Activated CD8-positive, alpha-beta T cell treated with anti-CD3 and anti-CD28 coated beads for 36 hours (primary cell): ENCODE measurements at regions of chr5 and their contacts with region 1.

Region 1: GRCh38 chr5:134041570-134042411 is 37.0 kb upstream of the VDAC1 start:
- DNase-seq: peak; percentile 41
- ATAC-seq: peak; percentile 32
- H3K4me3 Mint-ChIP-seq: no peak overlapping the region
- H3K27ac Mint-ChIP-seq: no peak overlapping the region
- H3K4me1 Mint-ChIP-seq: peaks cover 32% of the 10 kb centered on the region
- H3K27me3 Mint-ChIP-seq: no peaks in the 10 kb centered on the region
- CTCF ChIP-seq: no peak

Region 2: DNA sequence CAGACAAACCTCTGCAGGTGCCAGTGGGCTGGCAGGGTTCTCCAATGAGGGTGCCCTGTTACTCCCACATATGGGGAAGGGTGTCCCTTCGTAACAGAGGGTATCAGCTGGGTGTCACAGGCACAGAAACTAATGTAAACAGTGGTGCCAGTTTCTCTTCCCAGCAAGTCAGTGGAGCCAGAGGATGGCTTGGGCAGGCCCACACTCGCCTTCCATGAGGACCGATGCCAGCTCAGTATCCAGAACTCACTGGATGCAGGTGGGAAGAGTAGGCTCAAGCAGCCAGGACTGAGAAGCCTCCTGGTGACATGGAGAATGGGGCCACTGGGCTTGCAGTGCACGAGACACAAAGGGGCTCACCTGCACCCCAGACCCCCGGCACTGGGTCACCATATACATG is 459.9 kb before region 1 on chr5:
- CTCF ChIA-PET with region 1: no interaction called
- POLR2A ChIA-PET with region 1: no interaction called
- intact Hi-C with region 1: no loop called
- DNase-seq: no peak
- ATAC-seq: no peak
- H3K4me3 Mint-ChIP-seq: no peak overlapping the region
- H3K27ac Mint-ChIP-seq: no peak overlapping the region
- H3K4me1 Mint-ChIP-seq: no peaks in the 10 kb centered on the region
- H3K27me3 Mint-ChIP-seq: peaks cover 18% of the 10 kb centered on the region
- CTCF ChIP-seq: no peak

Region 3: GRCh38 chr5:133952729-133953567 is 88.8 kb before region 1 on chr5:
- CTCF ChIA-PET with region 1: no interaction called
- POLR2A ChIA-PET with region 1: no interaction called
- intact Hi-C with region 1: no loop called
- DNase-seq: no peak
- ATAC-seq: no peak
- H3K4me3 Mint-ChIP-seq: no peak overlapping the region
- H3K27ac Mint-ChIP-seq: peak overlapping the region; percentile 16
- H3K4me1 Mint-ChIP-seq: peaks cover 10% of the 10 kb centered on the region
- H3K27me3 Mint-ChIP-seq: no peaks in the 10 kb centered on the region
- CTCF ChIP-seq: no peak

Region 4: DNA sequence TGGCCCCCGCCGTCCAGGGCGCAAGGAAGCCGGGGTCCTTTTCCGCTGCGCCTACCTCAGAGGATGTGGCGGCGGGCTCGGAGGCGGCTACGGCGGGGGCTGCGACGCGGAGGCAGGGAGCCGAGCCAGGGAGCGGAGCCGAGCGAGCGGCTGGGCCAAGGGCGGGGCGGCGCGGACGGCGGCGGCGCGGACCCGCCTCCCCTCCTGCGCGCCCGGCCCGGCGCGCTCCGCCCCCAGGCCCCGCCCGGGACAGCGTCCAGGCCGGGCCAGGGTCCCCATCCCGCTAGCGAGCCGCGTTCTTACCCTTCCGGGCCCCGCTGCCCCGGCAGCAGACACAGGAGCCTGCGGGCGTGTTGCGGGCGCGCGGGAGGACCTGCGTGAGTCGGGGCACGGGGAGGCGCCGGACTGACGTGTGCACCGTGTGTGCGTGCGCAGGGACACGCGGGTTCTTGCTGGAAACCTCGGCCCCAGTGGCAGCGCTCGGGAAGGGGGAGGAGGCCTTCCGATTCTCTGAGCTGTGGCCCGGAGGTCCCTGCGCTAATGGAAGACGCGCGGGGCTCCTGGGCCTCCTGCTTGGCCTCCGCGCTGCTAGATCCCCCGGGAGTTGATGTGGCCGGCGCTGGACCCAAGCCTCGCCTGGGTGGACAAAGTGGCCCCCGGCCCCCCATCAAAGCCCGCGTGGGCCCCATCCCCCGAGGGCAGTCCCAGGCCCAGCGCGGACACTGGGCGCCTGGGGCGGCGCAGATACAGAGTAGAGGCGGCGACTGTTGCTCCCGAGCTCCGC is 37.0 kb before region 1 on chr5 and contains the start of gene VDAC1:
- CTCF ChIA-PET with region 1: interaction called, 19 read pairs
- POLR2A ChIA-PET with region 1: interaction called, 11 read pairs
- intact Hi-C with region 1: no loop called
- DNase-seq: peak; percentile 89
- ATAC-seq: peak; percentile 85
- H3K4me3 Mint-ChIP-seq: peak within 1 kb of the TSS; percentile 95
- H3K27ac Mint-ChIP-seq: peak within 1 kb of the TSS; percentile 99
- H3K4me1 Mint-ChIP-seq: peaks cover 39% of the 10 kb centered on the region
- H3K27me3 Mint-ChIP-seq: no peaks in the 10 kb centered on the region
- CTCF ChIP-seq: no peak
- total RNA-seq, gene VDAC1: 481 to 484 TPM

Region 5: GRCh38 chr5:134053840-134054338 is 12.1 kb after region 1 on chr5:
- CTCF ChIA-PET with region 1: interaction called, 37 read pairs
- POLR2A ChIA-PET with region 1: interaction called, 4 read pairs
- intact Hi-C with region 1: no loop called
- DNase-seq: no peak
- ATAC-seq: peak; percentile 74
- H3K4me3 Mint-ChIP-seq: no peak overlapping the region
- H3K27ac Mint-ChIP-seq: peak overlapping the region; percentile 58
- H3K4me1 Mint-ChIP-seq: peaks cover 38% of the 10 kb centered on the region
- H3K27me3 Mint-ChIP-seq: no peaks in the 10 kb centered on the region
- CTCF ChIP-seq: no peak

Region 6: GRCh38 chr5:134077926-134078580 is 36.3 kb after region 1 on chr5:
- CTCF ChIA-PET with region 1: interaction called, 28 read pairs
- POLR2A ChIA-PET with region 1: no interaction called
- intact Hi-C with region 1: no loop called
- DNase-seq: peak; percentile 61
- ATAC-seq: peak; percentile 32
- H3K4me3 Mint-ChIP-seq: no peak overlapping the region
- H3K27ac Mint-ChIP-seq: peak overlapping the region; percentile 93
- H3K4me1 Mint-ChIP-seq: peaks cover 58% of the 10 kb centered on the region
- H3K27me3 Mint-ChIP-seq: no peaks in the 10 kb centered on the region
- CTCF ChIP-seq: no peak

Region 7: GRCh38 chr5:134131578-134132350 is 90.0 kb after region 1 on chr5:
- CTCF ChIA-PET with region 1: interaction called, 1,049 read pairs
- POLR2A ChIA-PET with region 1: interaction called, 11 read pairs
- intact Hi-C with region 1: no loop called
- DNase-seq: peak; percentile 35
- ATAC-seq: peak; percentile 2
- H3K4me3 Mint-ChIP-seq: peak overlapping the region; percentile 54
- H3K27ac Mint-ChIP-seq: peak overlapping the region; percentile 82
- H3K4me1 Mint-ChIP-seq: peaks cover 97% of the 10 kb centered on the region
- H3K27me3 Mint-ChIP-seq: no peaks in the 10 kb centered on the region
- CTCF ChIP-seq: no peak

Region 8: GRCh38 chr5:134161513-134162395 is 120.0 kb after region 1 on chr5:
- CTCF ChIA-PET with region 1: interaction called, 1,049 read pairs
- POLR2A ChIA-PET with region 1: no interaction called
- intact Hi-C with region 1: no loop called
- DNase-seq: no peak
- ATAC-seq: peak; percentile 42
- H3K4me3 Mint-ChIP-seq: no peak overlapping the region
- H3K27ac Mint-ChIP-seq: peak overlapping the region; percentile 69
- H3K4me1 Mint-ChIP-seq: peaks cover 39% of the 10 kb centered on the region
- H3K27me3 Mint-ChIP-seq: no peaks in the 10 kb centered on the region
- CTCF ChIP-seq: no peak

Region 9: DNA sequence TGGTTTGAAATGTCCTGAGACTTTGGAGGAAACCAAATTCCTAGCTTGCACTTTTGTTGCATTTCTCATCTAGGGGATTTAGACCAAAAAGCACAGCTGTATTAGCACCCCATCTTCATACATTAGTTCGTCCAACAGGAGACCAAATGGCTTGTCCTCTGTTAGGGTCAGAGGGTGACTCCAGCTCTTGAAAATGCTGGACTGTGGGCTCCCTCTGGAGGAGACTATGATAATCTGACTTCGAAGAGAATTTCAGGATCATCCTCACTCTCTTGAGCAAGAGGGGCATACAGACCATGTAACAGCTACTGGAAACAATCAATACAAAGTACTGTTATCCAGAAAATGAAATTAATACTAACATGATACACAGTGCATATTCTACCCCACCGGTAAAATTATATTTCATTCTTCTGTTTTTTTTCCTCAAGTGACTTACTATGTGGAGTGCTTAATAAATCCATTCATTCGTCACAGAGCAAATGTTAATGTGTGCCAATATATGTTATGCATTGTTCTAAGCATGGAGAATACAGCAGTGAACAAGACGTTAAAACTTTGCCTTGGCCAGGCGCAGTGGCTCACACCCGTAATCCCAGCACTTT is 247.8 kb after region 1 on chr5:
- CTCF ChIA-PET with region 1: interaction called, 12 read pairs
- POLR2A ChIA-PET with region 1: no interaction called
- intact Hi-C with region 1: no loop called
- DNase-seq: peak; percentile 55
- ATAC-seq: peak; percentile 77
- H3K4me3 Mint-ChIP-seq: no peak overlapping the region
- H3K27ac Mint-ChIP-seq: no peak overlapping the region
- H3K4me1 Mint-ChIP-seq: peaks cover 4% of the 10 kb centered on the region
- H3K27me3 Mint-ChIP-seq: peaks cover 5% of the 10 kb centered on the region
- CTCF ChIP-seq: peak; percentile 70